ENCODE measurements at regions of chr18 and their contacts with region 1.

Region 1: DNA sequence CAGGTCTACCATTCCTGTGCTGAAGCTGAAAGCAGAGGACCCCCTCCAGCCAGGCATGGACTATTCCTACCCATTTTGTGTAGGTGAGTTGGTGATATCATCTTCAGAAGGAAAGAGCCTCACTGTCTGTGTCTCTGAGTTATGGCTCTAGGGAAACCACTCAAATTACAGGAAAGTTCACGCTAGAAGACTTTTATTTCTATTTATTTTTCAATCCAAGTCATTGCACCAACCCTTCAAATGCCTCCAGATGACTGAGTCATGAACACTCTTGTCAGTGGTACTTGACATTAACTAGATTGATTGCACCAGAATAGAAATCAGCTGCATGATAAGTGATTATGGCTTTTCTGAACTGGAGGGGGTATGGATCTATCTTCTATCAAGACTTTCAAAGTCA is 338.4 kb downstream of the MBD2 start:
- DNase-seq: no peak
- H3K4me3 ChIP-seq: no peak overlapping the region
- H3K27ac ChIP-seq: no peak overlapping the region
- H3K4me1 ChIP-seq: no peaks in the 10 kb centered on the region
- H3K27me3 ChIP-seq: no peaks in the 10 kb centered on the region
- CTCF ChIP-seq: no peak
- POLR2A ChIP-seq: no peak

Region 2: DNA sequence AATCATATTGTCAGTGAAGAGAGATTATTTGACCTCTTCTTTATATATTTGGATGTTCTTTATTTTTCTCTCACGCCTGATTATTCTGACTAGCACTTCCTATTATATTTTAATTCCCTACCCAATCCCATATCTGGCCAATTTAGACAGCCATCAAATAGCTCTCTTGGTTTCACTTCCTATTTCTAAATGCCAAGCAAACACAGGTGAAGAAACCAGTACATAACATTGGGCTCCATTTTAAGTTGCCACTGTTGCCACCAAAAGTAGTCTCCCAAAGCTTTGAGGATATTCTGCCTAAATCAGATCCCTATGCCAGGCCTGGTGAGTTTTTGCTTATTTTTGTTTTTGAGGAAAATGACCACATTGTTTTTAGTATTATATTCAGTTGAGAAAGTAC is 208.6 kb before region 1 on chr18:
- intact Hi-C with region 1: loop called (anchors 10 kb)
- DNase-seq: no peak
- H3K4me3 ChIP-seq: no peak overlapping the region
- H3K27ac ChIP-seq: no peak overlapping the region
- H3K4me1 ChIP-seq: no peaks in the 10 kb centered on the region
- H3K27me3 ChIP-seq: no peaks in the 10 kb centered on the region
- CTCF ChIP-seq: no peak
- POLR2A ChIP-seq: no peak

Region 3: DNA sequence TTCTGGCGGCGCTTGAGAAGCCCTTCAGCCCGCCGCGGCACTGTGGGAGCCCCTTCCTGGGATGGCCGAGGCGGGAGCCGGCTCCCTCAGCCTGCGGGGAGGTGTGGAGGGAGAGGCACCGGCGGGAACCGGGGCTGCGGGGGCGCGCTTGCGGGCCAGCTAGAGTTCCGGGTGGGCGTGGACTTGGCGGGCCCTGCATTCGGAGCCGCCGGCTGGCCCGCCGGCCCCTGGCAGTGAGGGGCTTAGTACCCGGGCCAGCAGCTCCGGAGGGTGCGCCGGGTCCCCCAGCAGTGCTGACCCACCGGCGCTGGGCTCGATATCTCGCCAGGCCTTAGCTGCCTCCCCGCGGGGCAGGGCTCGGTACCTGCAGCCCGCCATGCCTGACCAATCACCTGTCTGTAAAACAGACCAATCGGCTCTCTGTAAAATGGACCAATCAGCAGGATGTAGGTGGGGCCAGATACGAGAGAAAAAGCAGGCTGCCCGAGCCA is 1778.8 kb after region 1 on chr18:
- intact Hi-C with region 1: no loop called
- DNase-seq: no peak
- H3K4me3 ChIP-seq: no peak overlapping the region
- H3K27ac ChIP-seq: no peak overlapping the region
- H3K4me1 ChIP-seq: no peaks in the 10 kb centered on the region
- H3K27me3 ChIP-seq: no peaks in the 10 kb centered on the region
- CTCF ChIP-seq: no peak
- POLR2A ChIP-seq: no peak